SK-N-SH (cell line): ENCODE measurements at regions of chr10 and their contacts with region 1.

Region 1: DNA sequence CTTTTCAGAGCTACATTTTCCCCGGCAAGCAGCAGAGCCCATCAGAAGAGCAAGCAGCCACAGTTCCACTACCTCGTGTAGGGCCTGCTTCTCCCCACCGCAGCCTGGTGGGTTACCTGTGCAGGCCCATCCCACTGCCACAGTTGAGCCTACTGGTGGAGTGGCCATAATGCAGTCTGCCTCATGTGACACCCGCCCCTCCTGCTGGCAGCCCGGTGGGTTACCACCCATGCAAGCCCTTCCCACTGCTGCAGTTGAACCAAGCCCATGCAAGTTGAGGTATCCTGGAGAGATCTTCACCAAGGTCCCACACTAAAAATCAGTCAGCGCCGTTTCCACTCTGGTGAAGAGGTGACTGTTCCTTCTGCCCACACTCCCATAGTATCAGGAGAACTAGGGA is 32.1 kb upstream of the CNNM1 start:
- DNase-seq: peak; percentile 72
- H3K4me3 ChIP-seq: no peak overlapping the region
- H3K27ac ChIP-seq: peak overlapping the region in 1 of 2 experiments; percentile 94; a peak in 2 of 4 replicates
- H3K4me1 ChIP-seq: peaks cover 0 to 16% of the 10 kb centered on the region in 2 experiments; a peak in 2 of 4 replicates
- H3K27me3 ChIP-seq: no peaks in the 10 kb centered on the region
- CTCF ChIP-seq: no peak
- EP300 ChIP-seq: no peak
- RAD21 ChIP-seq: no peak

Region 2: DNA sequence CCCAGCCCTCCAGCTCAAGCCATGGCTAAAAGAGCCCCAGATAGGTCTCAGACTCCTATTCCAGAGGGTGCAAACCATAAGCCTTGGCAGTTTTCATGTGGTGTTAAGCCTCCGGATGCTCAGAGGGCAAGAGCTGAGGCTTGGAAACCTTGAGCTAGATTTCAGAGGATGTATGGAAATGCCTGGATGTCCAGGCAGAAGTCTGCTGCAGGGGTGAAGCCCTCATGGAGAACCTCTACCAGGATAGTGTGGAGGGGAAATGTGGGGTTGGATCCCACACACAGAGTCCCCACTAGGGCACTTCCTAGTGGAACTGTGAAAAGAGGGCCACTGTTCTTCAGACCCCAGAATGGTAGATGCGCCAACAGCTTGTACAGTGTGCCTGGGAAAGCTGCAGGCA is 48.2 kb before region 1 on chr10:
- CTCF ChIA-PET with region 1: no interaction called
- POLR2A ChIA-PET with region 1: no interaction called
- DNase-seq: no peak
- H3K4me3 ChIP-seq: no peak overlapping the region
- H3K27ac ChIP-seq: no peak overlapping the region
- H3K4me1 ChIP-seq: no peaks in the 10 kb centered on the region
- H3K27me3 ChIP-seq: no peaks in the 10 kb centered on the region
- CTCF ChIP-seq: no peak
- EP300 ChIP-seq: no peak
- RAD21 ChIP-seq: no peak

Region 3: DNA sequence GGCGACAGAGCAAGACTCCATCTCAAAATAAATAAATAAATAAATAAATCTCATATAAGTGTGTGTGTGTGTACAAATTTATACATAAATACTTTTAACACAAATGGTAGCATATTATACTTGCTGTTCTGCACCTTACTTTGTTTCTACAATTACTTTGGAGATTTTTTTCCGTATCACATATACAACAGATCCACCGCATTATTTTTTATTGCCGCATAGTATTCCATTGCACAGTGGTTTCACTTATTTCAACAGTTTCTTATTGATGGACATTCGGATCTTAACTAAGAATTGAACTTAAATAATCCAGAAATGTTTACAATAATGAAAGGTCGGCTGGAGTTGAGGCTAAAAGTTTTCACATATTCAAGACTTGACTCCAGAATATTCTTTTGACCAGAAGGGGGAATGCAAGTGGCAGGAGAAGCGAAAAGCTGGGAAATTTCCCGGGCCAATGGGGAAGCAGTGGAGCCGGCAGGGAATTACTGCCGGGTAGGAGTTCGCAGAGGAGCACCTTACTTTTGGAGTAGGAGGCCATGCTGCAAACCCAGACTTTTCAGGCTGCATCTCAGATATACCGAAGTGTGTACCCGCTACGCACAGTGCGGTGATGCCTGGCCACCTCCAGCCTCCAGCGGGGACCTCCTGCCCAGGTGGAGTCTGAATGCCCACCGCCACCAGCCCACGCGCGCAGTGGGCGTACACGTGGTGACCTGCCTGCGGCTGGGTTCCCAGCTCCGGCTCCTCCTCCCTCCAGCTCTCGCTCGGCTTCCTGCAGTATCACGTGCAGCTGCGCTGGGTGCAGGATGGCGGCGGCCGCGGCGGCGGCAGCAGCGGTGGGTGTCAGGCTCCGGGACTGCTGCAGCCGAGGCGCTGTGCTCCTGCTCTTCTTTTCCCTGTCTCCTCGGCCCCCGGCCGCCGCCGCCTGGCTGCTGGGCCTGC is 31.8 kb after region 1 on chr10 and contains the start of gene CNNM1:
- CTCF ChIA-PET with region 1: no interaction called
- POLR2A ChIA-PET with region 1: interaction called, 10 read pairs
- DNase-seq: peak; percentile 86
- H3K4me3 ChIP-seq: peak within 1 kb of the TSS; percentile 46 to 47
- H3K27ac ChIP-seq: no peak within 1 kb of the TSS
- H3K4me1 ChIP-seq: peaks cover 0 to 18% of the 10 kb centered on the region in 2 experiments; a peak in 1 of 4 replicates
- H3K27me3 ChIP-seq: peaks cover 27% of the 10 kb centered on the region
- CTCF ChIP-seq: no peak
- EP300 ChIP-seq: no peak
- RAD21 ChIP-seq: no peak
- polyA plus RNA-seq, gene CNNM1: 0.12 and 0.16 TPM in 2 replicates